Activated CD8-positive, alpha-beta T cell treated with anti-CD3 and anti-CD28 coated beads for 36 hours (primary cell): ENCODE measurements at regions of chr19 and their contacts with region 1.

Region 1: GRCh38 chr19:41701401-41702075 is 6.9 kb upstream of the CEACAM5 start:
- DNase-seq: peak; percentile 46
- ATAC-seq: no peak
- H3K4me3 Mint-ChIP-seq: no peak overlapping the region
- H3K27ac Mint-ChIP-seq: no peak overlapping the region
- H3K4me1 Mint-ChIP-seq: no peaks in the 10 kb centered on the region
- H3K27me3 Mint-ChIP-seq: peaks cover 30% of the 10 kb centered on the region
- CTCF ChIP-seq: peak; percentile 53

Region 2: DNA sequence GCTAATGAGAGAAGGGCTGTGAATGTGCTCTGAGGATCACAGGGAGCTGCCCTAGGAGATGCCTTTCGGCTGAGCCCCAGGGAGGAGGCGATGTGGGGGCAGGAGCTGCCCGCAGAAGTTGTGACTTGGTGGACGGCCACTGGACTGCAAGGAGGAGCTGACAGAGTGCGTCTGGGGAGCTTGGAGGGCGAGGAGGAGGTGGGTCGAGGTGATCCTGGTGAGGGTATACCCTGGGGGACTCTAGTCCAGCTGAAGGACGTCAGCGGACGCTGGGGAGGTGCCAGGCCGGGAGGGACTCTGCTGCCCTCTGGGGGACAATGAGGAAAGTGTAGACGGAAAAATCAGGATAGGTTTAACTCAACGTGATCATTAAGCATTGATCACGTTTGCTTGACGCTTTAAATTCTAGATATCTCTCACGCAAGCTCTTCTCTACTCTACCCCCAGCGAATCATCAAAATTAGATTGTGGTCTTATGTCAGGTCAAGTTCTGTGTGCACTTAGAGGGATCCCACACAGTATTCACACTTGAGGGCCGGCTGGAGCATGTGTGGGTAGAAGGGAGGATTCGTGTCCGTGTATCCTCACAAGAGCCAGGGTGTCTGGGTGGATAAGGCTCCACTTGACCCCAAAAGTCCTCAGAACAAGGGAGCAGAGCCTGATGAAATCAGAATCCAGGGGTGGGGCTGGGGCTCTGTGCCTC is 10.1 kb before region 1 on chr19:
- CTCF ChIA-PET with region 1: interaction called, 19 read pairs
- POLR2A ChIA-PET with region 1: no interaction called
- intact Hi-C with region 1: no loop called
- DNase-seq: peak; percentile 45
- ATAC-seq: peak; percentile 37
- H3K4me3 Mint-ChIP-seq: no peak overlapping the region
- H3K27ac Mint-ChIP-seq: no peak overlapping the region
- H3K4me1 Mint-ChIP-seq: no peaks in the 10 kb centered on the region
- H3K27me3 Mint-ChIP-seq: peaks cover 26% of the 10 kb centered on the region
- CTCF ChIP-seq: peak; percentile 64